ENCODE measurements at regions of chr2 and their contacts with region 1.

Region 1: GRCh38 chr2:20661067-20661980 is 5.6 kb upstream of the GDF7 start:
- DNase-seq: peak; percentile 75
- H3K4me3 ChIP-seq: no peak overlapping the region
- H3K27ac ChIP-seq: no peak overlapping the region
- H3K4me1 ChIP-seq: peaks cover 14% of the 10 kb centered on the region
- CTCF ChIP-seq: peak; percentile 94

Region 2: GRCh38 chr2:20350753-20351554 is 310.4 kb before region 1 on chr2 and contains the start of gene PUM2:
- CTCF ChIA-PET with region 1: no interaction called
- POLR2A ChIA-PET with region 1: no interaction called
- intact Hi-C with region 1: no loop called
- DNase-seq: peak; percentile 97
- H3K4me3 ChIP-seq: peak within 1 kb of the TSS; percentile 82
- H3K27ac ChIP-seq: peak within 1 kb of the TSS; percentile 91
- H3K4me1 ChIP-seq: peaks cover 43% of the 10 kb centered on the region
- CTCF ChIP-seq: 0 out of 2 replicates have a peak, but pooled peaks have one; percentile 21
- total RNA-seq, gene PUM2: 40.4 and 48.2 TPM in 2 replicates

Region 3: GRCh38 chr2:20539133-20539719 is 122.1 kb before region 1 on chr2:
- CTCF ChIA-PET with region 1: no interaction called
- POLR2A ChIA-PET with region 1: no interaction called
- intact Hi-C with region 1: no loop called
- DNase-seq: no peak
- H3K4me3 ChIP-seq: no peak overlapping the region
- H3K27ac ChIP-seq: no peak overlapping the region
- H3K4me1 ChIP-seq: no peaks in the 10 kb centered on the region
- CTCF ChIP-seq: no peak

Region 4: DNA sequence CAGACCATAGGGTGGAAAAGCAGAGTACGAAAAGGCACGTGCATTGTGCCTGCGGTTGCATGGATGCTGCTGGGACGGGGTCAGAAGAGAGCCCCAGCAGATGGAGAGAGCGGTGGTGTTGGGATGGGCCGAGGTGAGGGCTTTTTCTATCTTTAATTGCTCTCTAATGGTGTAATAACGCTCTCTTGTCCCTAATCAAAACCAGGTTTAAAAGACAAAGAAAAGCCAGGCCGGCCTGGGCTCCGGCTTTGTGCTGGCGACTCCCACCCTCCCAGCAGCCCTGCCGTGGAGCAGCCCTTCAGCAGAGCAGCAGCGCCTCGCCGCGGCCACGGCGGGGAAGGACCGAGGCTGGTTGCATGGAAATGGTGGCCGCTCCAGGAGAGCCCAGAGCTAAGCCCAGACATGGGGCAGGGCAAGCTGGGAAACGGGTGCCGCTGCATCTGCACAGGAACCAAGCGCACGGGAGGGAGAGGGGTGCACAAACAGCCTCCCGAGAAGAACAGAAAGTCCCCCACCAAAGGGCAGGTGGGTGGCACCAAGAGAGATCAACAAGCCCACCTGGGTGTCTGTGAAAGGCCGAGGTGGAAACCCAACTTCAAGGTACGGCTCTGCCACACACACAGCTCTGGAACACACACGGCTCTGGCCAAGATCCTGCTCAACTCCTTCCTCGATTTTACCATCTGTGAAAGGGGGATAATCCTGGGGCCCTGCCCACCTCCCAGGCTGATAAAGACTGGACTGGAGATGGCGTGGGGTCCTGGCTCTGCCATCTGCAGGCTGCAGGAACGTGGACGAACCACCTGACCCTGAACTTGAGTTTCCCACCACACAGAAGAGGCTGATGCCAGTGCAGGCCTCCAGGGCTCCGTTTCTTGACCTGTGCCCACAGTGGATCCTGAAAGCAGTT is 25.4 kb before region 1 on chr2:
- CTCF ChIA-PET with region 1: no interaction called
- POLR2A ChIA-PET with region 1: no interaction called
- intact Hi-C with region 1: no loop called
- DNase-seq: peak; percentile 49
- H3K4me3 ChIP-seq: no peak overlapping the region
- H3K27ac ChIP-seq: no peak overlapping the region
- H3K4me1 ChIP-seq: peaks cover 14% of the 10 kb centered on the region
- CTCF ChIP-seq: peak; percentile 75

Region 5: GRCh38 chr2:20822535-20823490 is 161.5 kb after region 1 on chr2 and contains the start of gene LDAH:
- CTCF ChIA-PET with region 1: no interaction called
- POLR2A ChIA-PET with region 1: interaction called, 5 read pairs
- intact Hi-C with region 1: loop called (anchors 5 kb)
- DNase-seq: peak; percentile 89
- H3K4me3 ChIP-seq: peak within 1 kb of the TSS; percentile 97
- H3K27ac ChIP-seq: peak within 1 kb of the TSS; percentile 68
- H3K4me1 ChIP-seq: no peaks in the 10 kb centered on the region
- CTCF ChIP-seq: no peak
- total RNA-seq, gene LDAH: 14.5 and 21.7 TPM in 2 replicates

Region 6: DNA sequence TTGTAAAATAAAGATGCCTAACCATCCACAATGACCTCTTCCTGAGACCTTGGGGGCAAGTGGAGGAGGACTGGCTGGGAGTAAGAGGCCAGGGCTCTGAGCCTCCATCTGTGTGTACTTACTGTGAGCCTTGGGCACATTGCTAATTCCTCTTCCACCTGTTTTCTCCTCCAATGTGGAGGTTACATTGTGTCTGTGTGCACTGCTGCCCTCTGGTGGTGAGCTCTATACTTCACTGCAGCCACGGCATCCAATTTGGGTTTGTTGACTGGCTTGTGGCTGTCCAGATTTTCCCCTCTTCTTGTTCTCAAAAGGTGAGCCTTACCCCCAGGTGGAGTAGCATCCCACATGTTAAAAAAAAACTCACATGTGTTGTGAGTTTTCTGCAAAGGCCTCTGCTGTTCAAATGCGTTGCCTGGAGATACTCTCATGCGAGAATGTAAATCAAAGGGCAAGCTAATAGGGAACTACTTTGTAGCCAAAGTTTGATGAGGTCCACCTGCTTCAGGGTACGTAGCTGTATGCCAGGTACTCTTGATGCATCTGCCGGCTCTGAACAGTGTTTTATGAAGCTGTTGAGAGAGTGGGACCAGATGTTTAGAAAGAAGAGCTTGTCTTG is 301.7 kb after region 1 on chr2:
- CTCF ChIA-PET with region 1: interaction called, 23 read pairs
- POLR2A ChIA-PET with region 1: interaction called, 4 read pairs
- intact Hi-C with region 1: loop called (anchors 1 kb)
- DNase-seq: peak; percentile 66
- H3K4me3 ChIP-seq: no peak overlapping the region
- H3K27ac ChIP-seq: no peak overlapping the region
- H3K4me1 ChIP-seq: no peaks in the 10 kb centered on the region
- CTCF ChIP-seq: peak; percentile 91

Region 7: DNA sequence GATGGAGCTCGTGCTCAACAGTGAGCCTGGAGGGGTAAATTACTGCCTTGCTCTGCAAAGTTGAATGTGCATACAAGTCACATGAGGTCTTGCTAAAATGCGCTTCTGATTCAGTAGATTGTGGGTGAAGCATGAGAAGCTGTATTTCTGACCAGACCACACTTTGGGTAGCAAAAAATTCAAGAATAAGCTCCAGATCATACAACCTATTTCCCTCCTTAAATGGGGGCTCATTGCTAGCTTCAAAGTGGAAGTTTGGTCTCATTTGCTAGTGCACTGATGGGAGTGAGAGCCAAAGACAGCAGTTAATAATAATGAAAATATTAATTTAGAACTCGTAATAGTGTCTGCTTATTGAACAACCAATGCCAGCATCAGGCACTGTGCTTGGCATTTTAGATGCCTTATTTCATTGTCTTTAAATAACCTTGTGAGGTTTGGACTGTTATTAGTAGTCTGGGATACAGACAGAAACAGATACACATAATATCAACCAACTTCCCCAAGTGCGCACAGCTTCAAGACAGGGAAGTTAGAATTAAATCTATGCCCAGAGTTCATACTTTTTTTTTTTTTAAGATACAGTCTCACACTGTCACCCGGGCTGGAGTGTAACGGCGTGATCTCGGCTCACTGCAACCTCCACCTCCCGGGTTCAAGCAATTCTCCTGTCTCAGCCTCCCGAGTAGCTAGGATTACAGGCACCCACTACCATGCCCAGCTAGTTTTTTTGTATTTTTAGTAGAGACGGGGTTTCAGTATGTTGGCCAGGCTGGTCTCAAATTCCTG is 364.6 kb after region 1 on chr2:
- CTCF ChIA-PET with region 1: no interaction called
- POLR2A ChIA-PET with region 1: no interaction called
- intact Hi-C with region 1: loop called (anchors 5 kb)
- DNase-seq: no peak
- H3K4me3 ChIP-seq: no peak overlapping the region
- H3K27ac ChIP-seq: no peak overlapping the region
- H3K4me1 ChIP-seq: no peaks in the 10 kb centered on the region
- CTCF ChIP-seq: no peak

Region 8: GRCh38 chr2:21118302-21118920 is 457.1 kb after region 1 on chr2:
- CTCF ChIA-PET with region 1: interaction called, 4 read pairs
- POLR2A ChIA-PET with region 1: no interaction called
- intact Hi-C with region 1: loop called (anchors 5 kb)
- DNase-seq: peak; percentile 57
- H3K4me3 ChIP-seq: no peak overlapping the region
- H3K27ac ChIP-seq: no peak overlapping the region
- H3K4me1 ChIP-seq: peaks cover 7% of the 10 kb centered on the region
- CTCF ChIP-seq: peak; percentile 85